CD4-positive, alpha-beta memory T cell (primary cell): ENCODE measurements at regions of chr1 and their contacts with region 1.

Region 1: DNA sequence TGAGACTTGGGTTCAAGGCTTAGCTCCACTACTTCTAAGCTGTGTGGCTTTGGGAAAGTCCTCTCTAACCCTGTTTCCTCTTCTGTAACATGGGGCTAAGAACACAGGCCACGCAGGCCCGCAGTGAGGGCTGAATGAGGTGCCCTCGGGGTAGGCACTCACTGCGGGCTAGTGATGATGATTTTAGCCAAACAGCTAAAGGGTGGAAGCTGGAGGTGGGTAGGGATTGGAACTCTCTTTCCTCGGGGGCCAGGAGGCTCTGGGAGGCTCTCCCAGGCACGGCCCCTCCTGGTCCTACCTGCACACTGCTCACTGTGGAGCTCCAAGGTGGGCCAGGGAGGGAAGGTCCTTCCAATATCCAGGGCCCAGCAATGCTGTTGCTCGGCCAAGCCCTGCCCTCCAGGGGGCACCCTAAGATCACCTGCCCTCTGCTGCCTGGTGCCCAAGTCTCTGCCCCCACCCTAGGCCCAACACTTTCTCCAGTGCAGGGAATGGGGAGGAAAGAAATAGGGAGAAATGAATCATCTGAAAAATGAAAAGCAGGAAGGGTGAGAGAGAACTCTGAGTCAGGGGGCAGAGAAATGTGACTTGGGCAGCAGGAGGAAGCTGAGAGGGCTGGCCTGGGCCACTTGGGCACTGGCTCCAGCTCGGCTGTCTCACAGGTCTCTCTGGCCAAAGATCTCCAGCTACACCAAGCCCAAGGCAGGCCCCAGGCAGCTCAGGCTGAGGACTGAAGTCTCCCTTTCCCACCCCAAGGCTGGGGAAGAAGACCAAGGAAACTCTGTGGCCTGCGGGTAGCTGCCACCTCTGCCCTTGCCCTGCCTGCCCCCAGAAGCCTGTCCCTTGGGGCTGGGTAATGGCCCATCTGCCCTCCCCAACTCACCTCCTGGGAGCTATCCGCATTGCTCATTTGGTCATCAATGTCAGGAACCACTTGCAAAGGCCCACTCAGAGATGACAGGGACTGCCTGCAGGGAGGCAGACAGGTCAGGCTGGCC is 19.3 kb upstream of the EVA1B start:
- DNase-seq: peak in 4 of 5 donors; percentile 53 to 65 (median 58)
- H3K4me3 ChIP-seq: no peak overlapping the region
- H3K4me3 Mint-ChIP-seq: peak overlapping the region in 1 of 8 donors; percentile 35
- H3K27ac ChIP-seq: no peak overlapping the region
- H3K27ac Mint-ChIP-seq: peak overlapping the region in 5 of 7 donors; percentile 33 to 78 (median 43)
- H3K4me1 ChIP-seq: peaks cover 16% of the 10 kb centered on the region
- H3K4me1 Mint-ChIP-seq: peaks cover 6 to 51% (median 19%) of the 10 kb centered on the region in 4 donors
- H3K27me3 ChIP-seq: no peaks in the 10 kb centered on the region
- H3K27me3 Mint-ChIP-seq: no peaks in the 10 kb centered on the region

Region 2: DNA sequence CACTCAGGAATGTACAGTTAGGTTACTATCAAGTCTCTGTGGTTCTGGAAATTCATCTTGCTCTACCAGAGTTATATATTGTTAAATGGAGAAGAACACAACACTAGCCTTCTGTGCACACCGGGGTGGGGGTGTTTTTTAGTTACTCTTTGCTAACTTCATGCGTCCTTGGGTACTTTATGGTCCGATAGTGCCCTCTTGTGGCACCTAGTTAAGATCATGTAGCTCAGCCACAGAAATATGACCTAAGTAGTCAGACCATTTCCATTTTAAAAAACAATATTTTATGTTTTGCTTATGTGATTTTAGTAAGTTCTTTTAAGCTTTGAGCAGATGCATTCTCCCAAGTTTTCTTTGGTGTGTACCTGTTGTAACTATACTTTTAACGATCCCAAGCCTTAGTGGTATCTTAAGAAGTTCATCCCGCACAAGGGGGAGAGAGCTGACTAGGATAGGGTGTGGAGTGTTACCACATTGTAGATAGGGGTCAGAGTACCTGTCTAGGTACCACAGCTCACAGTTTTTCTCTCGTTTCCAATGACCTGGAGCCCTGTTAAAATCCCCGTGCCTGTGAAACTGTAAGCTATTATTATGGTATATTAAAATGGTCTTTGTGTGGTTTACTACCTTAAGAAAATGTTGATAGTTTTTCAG is 57.2 kb before region 1 on chr1:
- CTCF ChIA-PET with region 1: interaction called, 10 read pairs
- POLR2A ChIA-PET with region 1: no interaction called
- intact Hi-C with region 1: no loop called
- DNase-seq: peak; percentile 72 to 81 (median 75)
- H3K4me3 ChIP-seq: no peak overlapping the region
- H3K4me3 Mint-ChIP-seq: peak overlapping the region in 5 of 8 donors; percentile 5 to 41 (median 13)
- H3K27ac ChIP-seq: no peak overlapping the region
- H3K27ac Mint-ChIP-seq: peak overlapping the region; percentile 24 to 89 (median 76)
- H3K4me1 ChIP-seq: peaks cover 13% of the 10 kb centered on the region
- H3K4me1 Mint-ChIP-seq: peaks cover 8 to 29% (median 15%) of the 10 kb centered on the region in 4 donors
- H3K27me3 ChIP-seq: no peaks in the 10 kb centered on the region
- H3K27me3 Mint-ChIP-seq: no peaks in the 10 kb centered on the region

Region 3: GRCh38 chr1:36369061-36369861 is 26.5 kb after region 1 on chr1:
- CTCF ChIA-PET with region 1: interaction called, 122 read pairs
- POLR2A ChIA-PET with region 1: interaction called, 73 read pairs
- intact Hi-C with region 1: loop called (anchors 1 kb)
- DNase-seq: peak; percentile 76 to 80 (median 79)
- H3K4me3 ChIP-seq: no peak overlapping the region
- H3K4me3 Mint-ChIP-seq: peak overlapping the region in 6 of 8 donors; percentile 11 to 72 (median 28)
- H3K27ac ChIP-seq: peak overlapping the region; percentile 24
- H3K27ac Mint-ChIP-seq: peak overlapping the region; percentile 57 to 89 (median 82)
- H3K4me1 ChIP-seq: peaks cover 72% of the 10 kb centered on the region
- H3K4me1 Mint-ChIP-seq: peaks cover 46 to 75% (median 64%) of the 10 kb centered on the region in 4 donors
- H3K27me3 ChIP-seq: no peaks in the 10 kb centered on the region
- H3K27me3 Mint-ChIP-seq: no peaks in the 10 kb centered on the region

Region 4: GRCh38 chr1:36406440-36406839 is 63.7 kb after region 1 on chr1:
- CTCF ChIA-PET with region 1: interaction called, 23 read pairs
- POLR2A ChIA-PET with region 1: no interaction called
- intact Hi-C with region 1: no loop called
- DNase-seq: no peak
- H3K4me3 ChIP-seq: no peak overlapping the region
- H3K4me3 Mint-ChIP-seq: no peak overlapping the region
- H3K27ac ChIP-seq: no peak overlapping the region
- H3K27ac Mint-ChIP-seq: peak overlapping the region; percentile 6 to 93 (median 27)
- H3K4me1 ChIP-seq: no peaks in the 10 kb centered on the region
- H3K4me1 Mint-ChIP-seq: peaks cover 3 to 7% (median 5%) of the 10 kb centered on the region in 4 donors
- H3K27me3 ChIP-seq: no peaks in the 10 kb centered on the region
- H3K27me3 Mint-ChIP-seq: no peaks in the 10 kb centered on the region

Region 5: GRCh38 chr1:36420836-36421664 is 78.3 kb after region 1 on chr1:
- CTCF ChIA-PET with region 1: interaction called, 96 read pairs
- POLR2A ChIA-PET with region 1: interaction called, 13 read pairs
- intact Hi-C with region 1: loop called (anchors 1 kb)
- DNase-seq: peak; percentile 83 to 88 (median 86)
- H3K4me3 ChIP-seq: no peak overlapping the region
- H3K4me3 Mint-ChIP-seq: peak overlapping the region; percentile 49 to 84 (median 74)
- H3K27ac ChIP-seq: peak overlapping the region; percentile 30
- H3K27ac Mint-ChIP-seq: peak overlapping the region; percentile 82 to 97 (median 94)
- H3K4me1 ChIP-seq: peaks cover 21% of the 10 kb centered on the region
- H3K4me1 Mint-ChIP-seq: peaks cover 19 to 29% (median 22%) of the 10 kb centered on the region in 4 donors
- H3K27me3 ChIP-seq: no peaks in the 10 kb centered on the region
- H3K27me3 Mint-ChIP-seq: no peaks in the 10 kb centered on the region